Right cardiac atrium (tissue), 5 donors: ENCODE measurements at regions of chr10 and their contacts with region 1.

Region 1: DNA sequence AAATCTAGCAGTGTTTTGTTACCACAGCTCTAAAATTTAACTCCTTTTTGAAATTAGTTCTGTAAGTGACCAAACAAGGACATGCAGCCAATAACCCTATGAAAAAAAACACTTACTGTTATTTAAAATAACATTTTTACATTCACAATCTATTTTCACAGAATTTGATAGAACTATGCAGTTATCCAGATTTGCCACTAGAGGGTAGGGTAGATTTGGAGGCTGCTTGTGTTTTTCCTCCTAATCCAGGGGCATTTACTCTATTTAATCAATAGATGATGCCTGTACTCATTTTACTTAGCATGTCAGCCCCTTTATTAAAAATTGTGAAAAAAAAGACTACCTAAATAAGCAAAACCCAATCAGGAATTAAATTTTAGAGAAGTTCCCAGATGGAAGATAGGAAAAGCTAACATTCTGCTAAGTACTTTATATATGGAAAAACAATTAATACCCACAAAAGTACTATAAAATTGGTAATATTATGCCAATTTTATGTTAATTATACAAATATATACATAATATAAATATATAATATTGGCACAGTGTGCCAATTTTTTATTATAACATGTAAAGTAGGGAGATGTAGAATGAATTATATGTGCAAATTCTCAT is 18.1 kb upstream of the LIPK start:
- DNase-seq: no peak
- ATAC-seq: no peak
- H3K4me3 ChIP-seq: no peak overlapping the region
- H3K27ac ChIP-seq: no peak overlapping the region
- H3K4me1 ChIP-seq: no peaks in the 10 kb centered on the region
- H3K27me3 ChIP-seq: no peaks in the 10 kb centered on the region

Region 2: GRCh38 chr10:88791924-88792323 is 104.0 kb after region 1 on chr10:
- intact Hi-C with region 1: loop called in 1 of 4 experiments (anchors 10 kb)
- DNase-seq: peak in 1 of 3 donors; percentile 52
- ATAC-seq: peak in 1 of 2 donors; percentile 62
- H3K4me3 ChIP-seq: no peak overlapping the region
- H3K27ac ChIP-seq: no peak overlapping the region
- H3K4me1 ChIP-seq: no peaks in the 10 kb centered on the region
- H3K27me3 ChIP-seq: no peaks in the 10 kb centered on the region

Region 3: DNA sequence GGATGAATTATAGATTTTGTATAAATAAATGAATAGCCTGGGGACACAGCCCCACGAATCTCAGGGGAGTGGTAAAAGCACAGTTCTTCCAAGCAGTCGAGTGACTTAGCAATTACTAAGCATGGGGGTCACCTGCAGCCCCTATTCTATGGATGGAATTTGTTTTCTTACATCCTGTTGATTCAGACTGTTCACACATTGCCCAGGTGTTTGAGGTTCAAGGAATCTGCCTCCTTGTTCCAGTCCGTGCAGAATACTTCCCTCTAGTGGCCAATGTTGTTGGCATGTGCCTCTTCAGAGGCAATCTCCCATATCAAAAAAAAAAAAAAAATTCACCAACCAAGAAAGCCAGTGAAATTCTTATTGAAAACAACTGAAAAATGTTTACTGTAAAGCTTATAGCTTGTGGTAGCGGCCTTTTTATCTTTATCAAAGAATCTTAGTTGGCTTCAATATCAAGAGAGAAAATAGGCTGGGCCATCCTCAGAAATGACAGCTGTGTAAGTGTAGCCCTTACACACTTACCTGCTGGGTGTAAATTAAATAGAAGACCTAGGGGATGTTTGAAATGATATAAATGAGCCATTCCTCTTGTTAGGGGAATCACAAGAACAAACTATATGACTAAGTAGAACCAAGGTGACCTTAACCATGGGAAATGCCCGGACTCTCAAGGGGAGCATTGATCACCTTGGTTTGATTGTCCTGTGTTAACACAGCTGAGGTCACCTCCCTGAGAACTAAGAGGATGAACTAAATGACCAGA is 122.4 kb after region 1 on chr10:
- intact Hi-C with region 1: loop called in 3 of 4 experiments (anchors 5 to 10 kb)
- DNase-seq: no peak
- ATAC-seq: peak in 1 of 2 donors; percentile 68
- H3K4me3 ChIP-seq: no peak overlapping the region
- H3K27ac ChIP-seq: no peak overlapping the region
- H3K4me1 ChIP-seq: no peaks in the 10 kb centered on the region
- H3K27me3 ChIP-seq: no peaks in the 10 kb centered on the region